ENCODE measurements at regions of chr5 and their contacts with region 1.

Region 1: GRCh38 chr5:177487975-177488374 is 9.4 kb downstream of the PDLIM7 start:
- DNase-seq: no peak
- H3K4me3 ChIP-seq: no peak overlapping the region
- H3K27ac ChIP-seq: no peak overlapping the region
- H3K27me3 ChIP-seq: no peaks in the 10 kb centered on the region
- CTCF ChIP-seq: no peak

Region 2: GRCh38 chr5:177474846-177475562 is 13.0 kb before region 1 on chr5:
- intact Hi-C with region 1: loop called in 1 of 2 experiments (anchors 1 kb)
- DNase-seq: no peak
- H3K4me3 ChIP-seq: no peak overlapping the region
- H3K27ac ChIP-seq: peak overlapping the region in 7 of 59 donors; percentile 4 to 46 (median 21)
- H3K27me3 ChIP-seq: no peaks in the 10 kb centered on the region
- CTCF ChIP-seq: no peak

Region 3: DNA sequence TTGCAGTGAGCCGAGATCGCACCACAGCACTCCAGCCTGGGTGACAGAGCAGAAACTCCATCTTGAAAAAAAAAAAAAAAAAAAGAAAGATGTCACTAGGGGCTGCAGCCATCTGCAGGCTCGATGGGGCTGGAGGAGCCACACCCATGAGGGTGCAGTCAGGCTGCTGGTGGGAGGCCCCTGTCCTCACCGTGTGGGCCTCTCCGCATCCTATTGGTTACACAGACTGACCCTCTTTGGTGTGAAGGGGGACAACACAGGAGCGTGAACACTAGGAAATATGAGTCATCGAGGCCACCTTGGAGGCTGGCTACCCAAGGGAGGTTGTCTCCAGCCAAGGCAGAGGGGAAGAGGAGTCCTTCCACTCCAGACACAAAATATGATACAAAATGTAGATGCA is 80.4 kb after region 1 on chr5:
- intact Hi-C with region 1: no loop called
- DNase-seq: no peak
- H3K4me3 ChIP-seq: no peak overlapping the region
- H3K27ac ChIP-seq: no peak overlapping the region
- H3K27me3 ChIP-seq: no peaks in the 10 kb centered on the region
- CTCF ChIP-seq: no peak